ENCODE measurements at regions of chrX and their contacts with region 1.

Region 1: DNA sequence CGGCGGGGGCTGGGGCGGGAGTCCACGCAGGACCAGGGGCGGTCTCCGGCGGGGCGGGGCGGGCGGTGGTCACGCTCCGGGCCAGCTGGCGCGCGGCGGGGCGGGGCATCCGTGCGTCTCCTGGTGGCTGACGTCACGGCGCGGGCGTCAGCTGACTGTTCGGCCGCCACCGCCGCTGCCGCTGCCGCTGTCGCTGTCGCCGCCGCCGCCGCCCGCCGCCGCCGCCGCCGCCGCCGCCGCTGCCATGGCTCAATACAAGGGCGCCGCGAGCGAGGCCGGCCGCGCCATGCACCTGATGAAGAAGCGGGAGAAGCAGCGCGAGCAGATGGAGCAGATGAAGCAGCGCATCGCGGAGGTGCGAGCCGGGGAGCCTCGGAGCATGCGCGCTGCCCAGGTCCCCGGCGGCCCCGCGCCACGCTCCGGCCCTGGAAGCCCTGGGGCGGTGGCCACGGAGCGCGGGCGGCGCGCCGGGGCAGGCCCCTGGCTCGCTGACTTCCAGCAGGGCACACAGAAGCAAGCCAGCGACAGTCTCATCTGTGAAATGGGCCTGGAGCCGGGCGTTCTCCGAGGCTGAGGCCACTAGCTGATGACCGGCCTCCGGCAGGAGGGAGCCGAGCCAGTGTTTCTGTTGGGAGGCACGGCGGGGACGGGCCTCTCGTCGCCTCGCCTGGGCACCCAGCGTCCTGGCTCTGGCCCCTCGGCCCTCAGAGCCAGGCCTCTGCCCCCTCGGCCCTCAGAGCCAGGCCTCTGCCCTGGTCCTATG is at the start of gene FAM50A:
- DNase-seq: peak; percentile 93
- total RNA-seq, gene FAM50A: 52.7 to 63.3 TPM

Region 2: DNA sequence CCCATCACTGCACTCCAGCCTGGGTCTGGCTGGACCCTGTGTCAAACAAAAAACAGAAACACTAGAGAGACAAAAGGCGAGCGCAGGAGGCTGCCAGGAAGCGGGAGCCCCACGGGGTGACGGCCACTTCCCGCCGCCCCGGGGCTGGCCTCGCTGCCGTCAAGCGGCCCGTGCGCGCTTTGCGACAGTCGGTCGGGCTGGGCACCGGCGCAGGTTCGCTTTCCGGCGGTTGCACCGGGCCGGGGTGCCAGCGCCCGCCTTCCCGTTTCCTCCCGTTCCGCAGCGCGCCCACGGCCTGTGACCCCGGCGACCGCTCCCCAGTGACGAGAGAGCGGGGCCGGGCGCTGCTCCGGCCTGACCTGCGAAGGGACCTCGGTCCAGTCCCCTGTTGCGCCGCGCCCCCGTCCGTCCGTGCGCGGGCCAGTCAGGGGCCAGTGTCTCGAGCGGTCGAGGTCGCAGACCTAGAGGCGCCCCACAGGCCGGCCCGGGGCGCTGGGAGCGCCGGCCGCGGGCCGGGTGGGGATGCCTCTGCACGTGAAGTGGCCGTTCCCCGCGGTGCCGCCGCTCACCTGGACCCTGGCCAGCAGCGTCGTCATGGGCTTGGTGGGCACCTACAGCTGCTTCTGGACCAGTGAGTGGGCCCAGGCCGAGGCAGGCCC is 32.7 kb before region 1 on chrX and contains the start of gene TAFAZZIN:
- intact Hi-C with region 1: no loop called
- DNase-seq: peak; percentile 92
- total RNA-seq, gene TAFAZZIN: 25.3 to 28.1 TPM

Region 3: DNA sequence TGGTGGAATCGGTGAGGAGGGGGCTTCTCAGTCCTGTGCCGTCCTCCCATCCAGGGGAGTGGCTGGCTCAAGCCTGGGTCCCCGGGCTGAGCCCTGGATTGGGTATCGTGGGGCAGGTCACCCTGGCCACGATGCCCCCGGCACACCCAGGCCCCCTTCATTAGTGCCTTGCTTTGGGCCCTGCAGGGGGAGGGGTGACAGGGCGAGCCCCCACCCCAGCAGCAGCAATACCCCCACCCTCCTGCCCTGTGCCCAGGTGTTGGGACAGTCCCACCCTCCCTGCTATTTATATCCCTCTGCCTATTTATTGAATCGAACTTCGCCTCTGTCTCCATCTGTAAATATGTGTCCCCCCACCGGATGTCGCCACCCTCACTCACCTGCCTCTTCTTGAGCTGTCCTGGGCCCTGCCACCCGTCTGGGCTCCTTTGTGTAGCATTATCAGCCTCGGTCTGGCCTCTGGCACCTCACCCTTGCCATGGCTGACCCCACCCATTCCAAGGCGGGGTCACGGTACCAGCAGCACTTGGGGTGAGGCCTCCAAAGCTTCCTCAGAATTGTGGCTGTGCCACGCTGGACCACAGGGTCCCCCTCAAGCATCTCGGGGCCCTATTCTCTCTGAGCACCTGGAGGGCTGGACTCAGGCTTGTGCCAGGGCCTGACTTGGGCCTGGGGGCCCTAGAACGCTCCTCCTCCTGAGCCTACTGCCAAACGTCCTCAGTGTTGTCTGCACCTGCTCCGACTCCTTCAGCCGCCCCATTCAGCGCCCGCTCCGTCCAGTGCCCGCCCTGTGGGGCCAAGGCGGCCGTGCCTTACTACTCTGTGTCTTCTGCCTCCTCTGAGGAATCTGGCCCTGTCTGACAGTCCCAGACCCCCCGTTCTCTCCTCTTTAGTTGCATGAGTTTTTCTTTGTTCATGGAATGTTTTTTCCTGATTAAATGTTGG is 28.8 kb after region 1 on chrX:
- intact Hi-C with region 1: loop called in 1 of 2 experiments (anchors 1 kb)
- DNase-seq: peak; percentile 72

Region 4: DNA sequence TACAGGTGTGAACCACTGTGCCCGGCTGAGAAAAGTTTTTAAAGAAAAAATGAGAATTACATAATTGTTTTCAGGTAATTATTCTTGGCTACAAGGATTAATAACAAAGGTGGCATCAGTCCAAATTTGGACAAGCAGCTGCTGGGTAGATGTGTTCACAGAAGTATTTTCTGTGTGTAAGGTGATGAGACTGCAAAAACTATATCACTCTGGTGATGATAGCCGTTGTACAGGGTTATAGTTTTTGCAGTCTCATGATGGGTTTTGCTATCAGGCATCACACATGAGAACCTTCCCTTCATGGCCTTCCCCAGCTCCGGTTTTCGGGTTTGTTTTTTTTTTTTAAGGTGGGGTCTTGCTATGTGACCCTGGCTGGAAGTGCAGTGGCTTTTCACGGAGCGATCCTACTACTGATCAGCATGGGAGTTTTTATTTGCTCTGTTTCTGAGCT is 51.3 kb after region 1 on chrX:
- intact Hi-C with region 1: no loop called
- DNase-seq: no peak